K562 (cell line): ENCODE measurements at regions of chrX and their contacts with region 1.

Region 1: GRCh38 chrX:119516157-119516702 is 48.0 kb downstream of the SLC25A5 start:
- DNase-seq: peak; percentile 71 to 76 (median 74)
- ATAC-seq: peak; percentile 91
- H3K4me3 ChIP-seq: no peak overlapping the region
- H3K27ac ChIP-seq: no peak overlapping the region
- H3K4me1 ChIP-seq: no peaks in the 10 kb centered on the region; a peak in 2 of 5 replicates
- H3K27me3 ChIP-seq: no peaks in the 10 kb centered on the region; a peak in 1 of 5 replicates
- CTCF ChIP-seq: peak; percentile 87 to 94 (median 92)
- EP300 ChIP-seq: no peak
- POLR2A ChIP-seq: no peak
- RAD21 ChIP-seq: peak; percentile 79 to 94

Region 2: DNA sequence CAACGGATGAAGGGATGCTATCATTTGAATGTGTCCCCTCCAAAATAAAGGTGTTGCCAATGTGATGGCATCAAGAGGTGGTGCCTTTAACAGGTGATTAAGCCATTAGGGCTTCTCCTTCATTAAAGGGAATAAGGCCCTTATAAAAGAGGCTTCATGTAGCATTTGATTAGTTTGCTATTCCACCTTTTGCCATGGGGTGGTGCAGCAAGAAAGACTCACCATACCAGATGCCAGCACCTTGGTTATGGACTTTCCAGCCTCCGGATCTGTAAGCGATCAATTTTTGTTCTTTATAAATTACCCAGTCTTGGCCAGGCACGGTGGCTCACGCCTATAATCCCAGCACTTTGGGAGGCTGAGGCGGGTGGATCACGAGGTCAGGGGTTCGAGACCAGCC is 125.0 kb before region 1 on chrX:
- CTCF ChIA-PET with region 1: no interaction called
- POLR2A ChIA-PET with region 1: no interaction called
- in situ Hi-C with region 1: no loop called
- intact Hi-C with region 1: loop called (anchors 1 kb)
- DNase-seq: peak in 2 of 4 experiments; percentile 24 to 30
- ATAC-seq: peak; percentile 60; the same call in 1 of the 3 replicates
- H3K4me3 ChIP-seq: no peak overlapping the region
- H3K27ac ChIP-seq: no peak overlapping the region
- H3K4me1 ChIP-seq: peaks cover 0 to 3% of the 10 kb centered on the region in 2 experiments; a peak in 2 of 5 replicates
- H3K27me3 ChIP-seq: no peaks in the 10 kb centered on the region
- CTCF ChIP-seq: peak; percentile 8 to 41 (median 35); a peak in 3 of 6 replicates
- EP300 ChIP-seq: no peak
- POLR2A ChIP-seq: no peak
- RAD21 ChIP-seq: peak in 1 of 2 experiments; percentile 54; a peak in 2 of 4 replicates

Region 3: DNA sequence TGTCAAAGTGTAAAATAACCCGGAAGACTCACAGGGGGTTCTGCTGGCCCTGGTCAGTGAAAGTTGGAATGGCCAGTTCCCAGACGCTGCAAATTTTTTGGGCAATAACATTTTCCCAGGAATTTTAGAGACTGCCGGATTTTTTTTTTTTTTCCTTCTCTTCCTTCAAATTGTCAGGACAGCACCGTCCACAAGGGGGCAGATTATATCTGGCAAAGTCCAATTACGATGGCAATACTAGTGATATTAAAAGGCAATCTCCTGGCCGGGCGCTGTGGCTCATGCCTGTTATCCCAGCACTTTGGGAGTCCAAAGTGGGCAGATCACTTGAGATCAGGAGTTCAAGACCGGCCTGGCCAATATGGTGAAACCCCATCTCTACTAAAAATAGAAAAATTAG is 27.5 kb before region 1 on chrX:
- CTCF ChIA-PET with region 1: interaction called, 4 read pairs
- POLR2A ChIA-PET with region 1: no interaction called
- in situ Hi-C with region 1: no loop called
- intact Hi-C with region 1: loop called (anchors 1 kb)
- DNase-seq: peak in 3 of 4 experiments; percentile 22 to 50 (median 22)
- ATAC-seq: peak; percentile 55; the same call in 2 of the 3 replicates
- H3K4me3 ChIP-seq: no peak overlapping the region
- H3K27ac ChIP-seq: no peak overlapping the region
- H3K4me1 ChIP-seq: no peaks in the 10 kb centered on the region; a peak in 1 of 5 replicates
- H3K27me3 ChIP-seq: no peaks in the 10 kb centered on the region
- CTCF ChIP-seq: peak; percentile 51 to 62 (median 53); a peak in 5 of 6 replicates
- EP300 ChIP-seq: no peak
- POLR2A ChIP-seq: no peak
- RAD21 ChIP-seq: peak in 1 of 2 experiments; percentile 29; a peak in 2 of 4 replicates

Region 4: DNA sequence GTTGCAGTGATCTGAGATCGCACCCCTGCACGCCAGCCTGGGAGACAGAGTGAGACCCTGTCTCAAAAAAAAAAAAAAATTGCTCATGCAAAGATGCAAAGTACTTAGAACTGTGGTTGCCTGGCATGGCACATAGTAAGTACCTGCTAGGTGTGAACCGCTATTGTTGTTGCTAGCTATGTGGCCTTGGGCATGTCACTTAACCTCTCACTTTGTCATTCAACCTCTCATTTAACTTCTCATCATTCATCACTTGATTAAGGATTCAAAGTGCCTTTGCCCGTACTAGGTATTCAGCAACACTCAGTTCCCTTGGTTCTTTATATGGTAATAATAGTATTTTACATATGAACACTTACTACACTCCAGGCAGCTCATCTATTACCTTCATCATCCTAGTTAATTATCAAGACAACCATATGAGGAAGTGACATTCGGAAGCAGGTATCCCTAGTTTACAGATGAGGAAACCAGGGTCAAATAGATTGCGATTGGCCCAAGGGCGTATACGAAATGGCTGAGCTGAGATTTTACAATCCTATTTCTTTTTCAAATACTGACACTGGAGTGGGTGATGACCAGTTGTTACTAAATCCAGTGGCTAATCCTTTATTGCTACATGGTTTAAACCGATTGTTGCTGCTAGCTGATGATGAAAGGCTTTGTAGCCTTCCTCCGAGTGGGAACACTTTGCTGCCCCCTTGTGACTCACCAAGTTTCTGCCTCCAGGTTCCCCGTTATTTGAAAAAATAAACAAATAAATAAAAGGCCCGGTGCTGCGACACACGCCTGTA is 213.4 kb after region 1 on chrX:
- CTCF ChIA-PET with region 1: interaction called, 5 read pairs
- POLR2A ChIA-PET with region 1: no interaction called
- in situ Hi-C with region 1: loop called (anchors 5 kb)
- intact Hi-C with region 1: loop called (anchors 1 kb)
- DNase-seq: peak; percentile 31 to 69 (median 43)
- ATAC-seq: peak; percentile 79
- H3K4me3 ChIP-seq: no peak overlapping the region
- H3K27ac ChIP-seq: no peak overlapping the region
- H3K4me1 ChIP-seq: peaks cover 0 to 5% of the 10 kb centered on the region in 2 experiments; a peak in 2 of 5 replicates
- H3K27me3 ChIP-seq: peaks cover 6 to 19% of the 10 kb centered on the region in 2 experiments; a peak in 3 of 5 replicates
- CTCF ChIP-seq: peak; percentile 58 to 78 (median 72)
- EP300 ChIP-seq: no peak
- POLR2A ChIP-seq: no peak
- RAD21 ChIP-seq: peak; percentile 70 to 79

Region 5: DNA sequence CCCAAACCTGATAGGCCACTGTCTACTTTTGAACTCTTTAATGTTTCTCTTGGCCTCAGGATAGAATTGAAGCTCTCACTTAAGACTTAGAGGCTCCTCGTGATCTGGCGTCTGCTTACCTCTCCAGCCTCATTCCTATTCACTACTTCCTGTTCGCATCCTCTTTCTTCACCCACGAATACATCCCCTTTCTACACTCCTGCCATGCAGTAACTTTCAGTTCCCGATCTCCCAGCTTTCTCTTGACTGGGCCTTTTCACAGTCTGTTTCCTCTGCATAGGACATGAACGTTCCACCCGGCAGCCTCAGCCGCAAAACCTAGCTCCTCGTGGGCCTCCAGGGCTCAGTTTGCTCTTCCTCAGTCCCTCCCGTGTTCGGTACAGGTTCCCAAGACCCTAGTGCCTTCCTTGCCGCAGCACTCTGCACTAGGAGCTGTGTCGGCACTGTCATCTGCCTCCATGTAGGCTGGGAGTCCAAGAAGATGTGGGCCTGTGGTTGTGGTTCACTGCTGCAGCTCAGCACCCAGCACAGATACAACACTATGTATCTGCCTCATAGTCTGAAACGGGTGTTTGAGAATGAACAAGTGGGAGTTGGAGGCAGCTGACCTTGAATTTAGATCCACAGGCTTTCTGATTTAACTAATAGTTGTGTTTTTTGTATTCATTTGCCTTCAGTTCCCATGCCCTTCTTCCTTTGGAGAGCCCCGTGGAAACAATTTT is 259.4 kb after region 1 on chrX:
- CTCF ChIA-PET with region 1: interaction called, 4 read pairs
- POLR2A ChIA-PET with region 1: no interaction called
- in situ Hi-C with region 1: no loop called
- intact Hi-C with region 1: loop called (anchors 2 kb)
- DNase-seq: no peak
- ATAC-seq: no peak
- H3K4me3 ChIP-seq: no peak overlapping the region
- H3K27ac ChIP-seq: no peak overlapping the region
- H3K4me1 ChIP-seq: no peaks in the 10 kb centered on the region; a peak in 1 of 5 replicates
- H3K27me3 ChIP-seq: no peaks in the 10 kb centered on the region
- CTCF ChIP-seq: no peak
- EP300 ChIP-seq: no peak
- POLR2A ChIP-seq: no peak
- RAD21 ChIP-seq: no peak

Region 6: GRCh38 chrX:119943185-119943988 is 427.2 kb after region 1 on chrX and contains the start of gene NKAP:
- CTCF ChIA-PET with region 1: no interaction called
- POLR2A ChIA-PET with region 1: no interaction called
- in situ Hi-C with region 1: no loop called
- intact Hi-C with region 1: loop called (anchors 10 kb)
- DNase-seq: peak; percentile 73 to 94 (median 78)
- ATAC-seq: peak; percentile 90
- H3K4me3 ChIP-seq: peak within 1 kb of the TSS; percentile 89
- H3K27ac ChIP-seq: peak within 1 kb of the TSS; percentile 82
- H3K4me1 ChIP-seq: peaks cover 3 to 9% of the 10 kb centered on the region in 2 experiments; a peak in 3 of 5 replicates
- H3K27me3 ChIP-seq: peaks cover 0 to 4% of the 10 kb centered on the region in 2 experiments; a peak in 1 of 5 replicates
- CTCF ChIP-seq: 0 out of 6 replicates have a peak, but pooled peaks of 2 of the 3 experiments have one; percentile 10 to 19
- EP300 ChIP-seq: peak; percentile 35; the same call in 1 of the 2 replicates
- POLR2A ChIP-seq: peak; percentile 79
- RAD21 ChIP-seq: no peak
- polyA plus RNA-seq, gene NKAP: 3.1 to 3.4 TPM